Activated T-helper 2 cell treated with anti-CD3 and anti-CD28 coated beads, Interferon-gamma antibody, Interleukin-2, Interleukin-4, amounts not matched to agents 10 μg/mL and 5 μg/mL and 100 μg/mL, durations not matched to agents 14 hours and 24 hours and 36 hours (primary cell): ENCODE measurements at regions of chrX and their contacts with region 1.

Region 1: GRCh38 chrX:71111141-71111843 is at the start of gene IL2RG:
- DNase-seq: peak; percentile 74
- H3K4me3 Mint-ChIP-seq: peak within 1 kb of the TSS; percentile 100
- H3K27ac Mint-ChIP-seq: peak within 1 kb of the TSS; percentile 95
- H3K4me1 Mint-ChIP-seq: peaks cover 39% of the 10 kb centered on the region
- H3K27me3 Mint-ChIP-seq: no peaks in the 10 kb centered on the region
- total RNA-seq, gene IL2RG: 358 and 366 TPM in 2 replicates

Region 2: DNA sequence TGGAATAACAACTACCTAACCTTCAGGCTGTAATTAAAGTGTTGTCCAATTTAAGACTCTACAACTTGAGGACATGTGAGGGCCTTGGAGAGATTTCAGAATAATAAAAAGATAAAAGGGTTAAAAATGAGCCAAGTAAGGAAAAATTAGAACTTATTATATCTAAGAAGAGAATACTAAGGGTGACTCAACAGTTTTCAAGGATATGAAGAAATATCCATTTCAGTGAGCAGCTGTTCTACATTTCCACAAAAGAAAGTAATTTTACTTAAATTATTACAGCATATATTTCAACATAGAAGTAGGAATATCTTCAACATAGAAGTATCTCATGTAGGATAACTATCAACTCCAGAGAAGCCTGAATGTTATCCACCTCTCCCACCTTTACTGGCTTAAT is 54.4 kb before region 1 on chrX:
- intact Hi-C with region 1: no loop called
- DNase-seq: no peak
- H3K4me3 Mint-ChIP-seq: no peak overlapping the region
- H3K27ac Mint-ChIP-seq: no peak overlapping the region
- H3K4me1 Mint-ChIP-seq: peaks cover 28% of the 10 kb centered on the region
- H3K27me3 Mint-ChIP-seq: no peaks in the 10 kb centered on the region

Region 3: DNA sequence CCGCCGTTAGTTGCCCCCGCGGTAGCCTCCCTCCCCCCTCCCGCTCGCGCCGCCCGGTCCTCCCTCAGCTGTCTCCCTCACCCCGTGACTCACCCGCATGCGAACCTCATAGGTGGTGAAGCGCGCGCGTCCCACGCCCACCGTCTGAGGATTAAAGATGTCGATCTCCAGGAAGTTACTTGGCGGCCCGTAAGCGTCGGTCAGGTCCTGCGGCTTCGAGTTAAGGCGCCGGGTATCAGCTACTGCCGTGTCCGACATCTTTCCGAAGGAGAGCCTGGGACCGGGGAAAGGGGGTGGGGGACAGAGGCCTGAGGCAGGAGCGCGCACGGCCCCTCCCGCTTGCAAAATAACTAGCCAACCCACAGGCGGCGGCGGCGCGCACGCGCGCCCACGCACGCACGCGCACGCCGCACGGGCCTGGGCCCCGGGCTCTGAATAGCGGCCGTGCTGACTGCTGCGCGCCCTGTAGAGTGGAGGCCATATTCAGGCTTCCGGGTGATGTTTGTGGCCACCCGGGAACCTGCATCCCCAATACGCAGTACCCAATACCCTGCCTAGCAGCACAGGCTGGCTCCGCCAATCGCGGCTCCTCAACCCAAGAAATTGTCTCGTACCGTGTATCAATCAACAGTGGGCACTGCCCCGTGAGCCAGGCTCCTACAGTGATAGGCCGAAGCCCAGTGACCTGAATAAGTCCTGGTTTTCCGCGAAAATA is 43.1 kb before region 1 on chrX and contains the start of gene SNX12:
- intact Hi-C with region 1: loop called (anchors 1 kb)
- DNase-seq: peak; percentile 87
- H3K4me3 Mint-ChIP-seq: peak within 1 kb of the TSS; percentile 99
- H3K27ac Mint-ChIP-seq: peak within 1 kb of the TSS; percentile 95
- H3K4me1 Mint-ChIP-seq: peaks cover 15% of the 10 kb centered on the region
- H3K27me3 Mint-ChIP-seq: peaks cover 9% of the 10 kb centered on the region
- total RNA-seq, gene SNX12: 49.9 and 50.1 TPM in 2 replicates